ENCODE measurements at regions of chr14 and their contacts with region 1.

Region 1: GRCh38 chr14:69298131-69299071 is 38.4 kb downstream of the GALNT16 start:
- DNase-seq: no peak
- H3K4me3 ChIP-seq: no peak overlapping the region
- H3K27ac ChIP-seq: no peak overlapping the region
- H3K27me3 ChIP-seq: peaks cover 34% of the 10 kb centered on the region
- CTCF ChIP-seq: no peak

Region 2: DNA sequence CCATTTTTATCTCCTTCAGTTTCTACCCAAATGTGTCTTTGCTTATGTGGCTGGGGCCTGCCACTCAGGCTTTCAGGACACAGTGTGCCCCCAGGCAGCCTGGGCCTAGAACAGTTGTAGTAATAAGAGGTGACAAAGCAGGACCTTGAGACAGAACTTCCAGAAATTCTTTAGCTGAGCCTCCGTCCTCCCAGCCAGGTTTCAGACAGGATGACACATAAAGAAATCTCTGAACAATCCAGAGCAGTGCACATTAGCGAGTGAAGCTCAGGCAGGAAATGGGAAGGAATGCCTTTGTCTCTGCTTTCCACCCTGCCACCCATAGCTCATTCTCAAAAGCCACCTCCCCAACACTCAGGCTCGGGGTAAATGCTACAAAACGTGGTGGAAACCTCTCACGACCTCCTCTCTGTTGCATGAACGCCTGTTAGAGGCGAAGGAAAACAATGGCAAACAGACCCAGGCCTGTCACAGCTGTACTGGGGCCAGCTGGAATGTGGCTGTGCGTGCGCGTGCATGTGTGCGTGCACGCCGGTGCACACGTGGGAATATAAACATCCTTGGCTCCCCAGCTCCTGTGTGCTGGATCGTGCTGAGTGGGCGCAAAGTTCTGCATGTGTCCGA is 792.3 kb before region 1 on chr14:
- CTCF ChIA-PET with region 1: no interaction called
- POLR2A ChIA-PET with region 1: no interaction called
- DNase-seq: no peak
- H3K4me3 ChIP-seq: no peak overlapping the region
- H3K27ac ChIP-seq: peak overlapping the region; percentile 84
- H3K27me3 ChIP-seq: no peaks in the 10 kb centered on the region
- CTCF ChIP-seq: no peak

Region 3: GRCh38 chr14:69288011-69288771 is 10.2 kb before region 1 on chr14:
- CTCF ChIA-PET with region 1: interaction called, 12 read pairs
- POLR2A ChIA-PET with region 1: no interaction called
- DNase-seq: peak; percentile 15
- H3K4me3 ChIP-seq: no peak overlapping the region
- H3K27ac ChIP-seq: no peak overlapping the region
- H3K27me3 ChIP-seq: peaks cover 12% of the 10 kb centered on the region
- CTCF ChIP-seq: peak; percentile 61

Measured in AG04450 (cell line).